Left ventricle myocardium superior (tissue), 1 donor: ENCODE measurements at regions of chr5 and their contacts with region 1.

Region 1: GRCh38 chr5:102583276-102584124 is 84.7 kb upstream of the SLCO6A1 start:
- DNase-seq: no peak
- ATAC-seq: no peak

Region 2: GRCh38 chr5:103041071-103041676 is 457.7 kb after region 1 on chr5:
- intact Hi-C with region 1: loop called (anchors 10 kb)
- DNase-seq: no peak
- ATAC-seq: no peak

Region 3: GRCh38 chr5:103079796-103080195 is 496.3 kb after region 1 on chr5:
- intact Hi-C with region 1: no loop called
- DNase-seq: no peak
- ATAC-seq: no peak

Region 4: DNA sequence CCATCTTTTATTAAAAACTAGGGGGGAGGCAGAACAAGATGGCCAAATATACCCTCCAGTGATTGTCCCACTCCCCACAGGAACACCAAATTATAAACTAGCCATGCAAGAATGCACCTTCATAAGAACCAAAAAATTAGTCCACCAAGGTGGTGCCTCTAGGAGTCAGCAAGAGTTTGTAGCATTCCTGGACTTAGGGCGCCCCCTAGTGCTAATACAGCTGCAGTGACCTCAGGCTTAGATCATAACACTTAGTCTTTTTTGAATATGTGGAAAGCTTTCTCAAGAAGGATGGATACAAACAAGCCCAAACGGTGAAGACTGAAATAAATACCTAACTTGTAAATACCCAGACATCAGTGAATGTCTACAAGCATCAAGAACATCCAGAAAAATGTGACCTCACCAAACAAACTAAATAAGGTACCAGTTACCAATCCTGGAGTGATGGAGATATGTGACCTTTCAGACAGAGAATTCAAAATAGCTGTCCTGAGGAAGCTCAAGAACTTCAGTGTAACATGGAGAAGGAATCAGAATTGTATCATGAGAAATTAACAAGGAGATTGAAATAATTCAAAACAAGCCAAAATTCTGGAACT is 555.9 kb after region 1 on chr5:
- intact Hi-C with region 1: loop called (anchors 5 kb)
- DNase-seq: peak; percentile 59
- ATAC-seq: peak; percentile 84